IMR-90 (cell line): ENCODE measurements at regions of chr10 and their contacts with region 1.

Region 1: GRCh38 chr10:36779234-36779846 is 346.1 kb upstream of the ANKRD30A start:
- DNase-seq: peak; percentile 81
- ATAC-seq: peak; percentile 99
- H3K4me3 ChIP-seq: no peak overlapping the region
- H3K27ac ChIP-seq: no peak overlapping the region
- H3K4me1 ChIP-seq: no peaks in the 10 kb centered on the region
- H3K27me3 ChIP-seq: no peaks in the 10 kb centered on the region
- CTCF ChIP-seq: peak; percentile 94
- POLR2A ChIP-seq: no peak
- RAD21 ChIP-seq: peak; percentile 98

Region 2: GRCh38 chr10:35103882-35104281 is 1675.5 kb before region 1 on chr10:
- CTCF ChIA-PET with region 1: no interaction called
- POLR2A ChIA-PET with region 1: no interaction called
- dilution Hi-C with region 1: no loop called
- in situ Hi-C with region 1: loop called (anchors 25 kb)
- intact Hi-C with region 1: no loop called
- DNase-seq: no peak
- ATAC-seq: no peak
- H3K4me3 ChIP-seq: no peak overlapping the region
- H3K27ac ChIP-seq: no peak overlapping the region
- H3K4me1 ChIP-seq: no peaks in the 10 kb centered on the region
- H3K27me3 ChIP-seq: peaks cover 3% of the 10 kb centered on the region
- CTCF ChIP-seq: no peak
- POLR2A ChIP-seq: no peak
- RAD21 ChIP-seq: no peak

Region 3: GRCh38 chr10:35236739-35237138 is 1542.6 kb before region 1 on chr10:
- CTCF ChIA-PET with region 1: interaction called, 8 read pairs
- POLR2A ChIA-PET with region 1: no interaction called
- dilution Hi-C with region 1: no loop called
- in situ Hi-C with region 1: loop called (anchors 25 kb)
- intact Hi-C with region 1: no loop called
- DNase-seq: peak; percentile 37
- ATAC-seq: peak; percentile 79
- H3K4me3 ChIP-seq: no peak overlapping the region
- H3K27ac ChIP-seq: no peak overlapping the region
- H3K4me1 ChIP-seq: no peaks in the 10 kb centered on the region
- H3K27me3 ChIP-seq: no peaks in the 10 kb centered on the region
- CTCF ChIP-seq: peak; percentile 48
- POLR2A ChIP-seq: no peak
- RAD21 ChIP-seq: peak; percentile 62

Region 4: DNA sequence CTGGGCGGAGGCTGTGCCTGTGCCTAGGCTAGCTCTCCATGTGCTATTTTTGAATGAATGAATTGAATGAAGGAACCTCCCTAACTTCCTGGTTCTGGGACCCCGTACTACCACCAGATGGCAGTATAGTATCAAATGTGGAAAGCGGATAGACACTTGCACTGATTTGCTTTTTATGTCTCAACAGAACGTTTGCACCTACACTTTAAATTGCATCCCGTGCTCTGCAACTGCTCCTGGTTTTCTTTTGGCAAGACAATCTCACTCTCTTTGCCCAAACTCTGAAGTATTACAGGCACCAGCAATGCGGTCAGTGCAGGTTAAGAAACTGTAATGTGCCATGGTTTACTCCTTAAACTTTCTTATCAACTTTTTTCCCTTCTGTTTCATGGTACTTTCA is 1143.8 kb before region 1 on chr10:
- CTCF ChIA-PET with region 1: interaction called, 11 read pairs
- POLR2A ChIA-PET with region 1: interaction called, 3 read pairs
- dilution Hi-C with region 1: no loop called
- in situ Hi-C with region 1: loop called (anchors 5 kb)
- intact Hi-C with region 1: loop called (anchors 1 kb)
- DNase-seq: peak; percentile 74
- ATAC-seq: peak; percentile 48; the same call in 1 of the 2 replicates
- H3K4me3 ChIP-seq: no peak overlapping the region
- H3K27ac ChIP-seq: no peak overlapping the region
- H3K4me1 ChIP-seq: peaks cover 5% of the 10 kb centered on the region; the same call in 1 of the 2 replicates
- H3K27me3 ChIP-seq: no peaks in the 10 kb centered on the region
- CTCF ChIP-seq: peak; percentile 96
- POLR2A ChIP-seq: peak; percentile 67; the same call in 1 of the 2 replicates
- RAD21 ChIP-seq: peak; percentile 96

Region 5: DNA sequence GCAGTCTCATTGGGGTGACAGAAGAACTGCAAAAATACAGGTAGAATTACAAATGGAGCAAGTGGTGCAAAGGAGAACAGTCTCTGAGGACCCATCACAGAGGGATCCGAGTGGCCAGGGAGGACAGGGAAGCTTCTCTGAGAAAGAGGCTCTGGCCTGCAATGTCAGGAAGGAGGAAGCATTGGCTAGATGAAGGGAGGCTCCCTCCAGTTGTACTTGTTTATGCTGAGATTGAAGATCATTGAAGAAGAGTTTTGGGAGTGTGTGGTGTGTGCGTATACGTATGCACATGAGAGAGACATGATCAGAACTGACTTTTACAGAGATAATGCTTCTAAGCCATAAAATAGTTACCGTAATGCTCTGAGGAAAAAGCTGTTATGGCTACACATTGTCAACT is 862.5 kb before region 1 on chr10:
- CTCF ChIA-PET with region 1: no interaction called
- POLR2A ChIA-PET with region 1: no interaction called
- dilution Hi-C with region 1: no loop called
- in situ Hi-C with region 1: no loop called
- intact Hi-C with region 1: loop called (anchors 10 kb)
- DNase-seq: peak; percentile 61
- ATAC-seq: peak; percentile 38; the same call in 1 of the 2 replicates
- H3K4me3 ChIP-seq: no peak overlapping the region
- H3K27ac ChIP-seq: no peak overlapping the region
- H3K4me1 ChIP-seq: peaks cover 7% of the 10 kb centered on the region; the same call in 1 of the 2 replicates
- H3K27me3 ChIP-seq: no peaks in the 10 kb centered on the region
- CTCF ChIP-seq: peak; percentile 48
- POLR2A ChIP-seq: no peak
- RAD21 ChIP-seq: peak; percentile 66